Activated CD4-positive, alpha-beta T cell treated with anti-CD3 and anti-CD28 coated beads, Interleukin-2, amount 10 ng/mL, durations not matched to agents 24 days and 14 days (primary cell): ENCODE measurements at regions of chr19 and their contacts with region 1.

Region 1: GRCh38 chr19:36528194-36528920 is at the start of gene ZNF260:
- DNase-seq: peak; percentile 97
- H3K4me3 Mint-ChIP-seq: peak within 1 kb of the TSS; percentile 96
- H3K27ac Mint-ChIP-seq: peak within 1 kb of the TSS; percentile 95
- H3K4me1 Mint-ChIP-seq: peaks cover 17% of the 10 kb centered on the region
- H3K27me3 Mint-ChIP-seq: no peaks in the 10 kb centered on the region
- total RNA-seq, gene ZNF260: 6.7 and 8.0 TPM in 2 replicates

Region 2: GRCh38 chr19:36489118-36489919 is 39.0 kb before region 1 on chr19 and contains the start of gene ZNF566:
- intact Hi-C with region 1: loop called (anchors 1 kb)
- DNase-seq: peak; percentile 97
- H3K4me3 Mint-ChIP-seq: peak within 1 kb of the TSS; percentile 99
- H3K27ac Mint-ChIP-seq: peak within 1 kb of the TSS; percentile 99
- H3K4me1 Mint-ChIP-seq: peaks cover 23% of the 10 kb centered on the region
- H3K27me3 Mint-ChIP-seq: no peaks in the 10 kb centered on the region
- total RNA-seq, gene ZNF566: 7.2 and 8.5 TPM in 2 replicates

Region 3: DNA sequence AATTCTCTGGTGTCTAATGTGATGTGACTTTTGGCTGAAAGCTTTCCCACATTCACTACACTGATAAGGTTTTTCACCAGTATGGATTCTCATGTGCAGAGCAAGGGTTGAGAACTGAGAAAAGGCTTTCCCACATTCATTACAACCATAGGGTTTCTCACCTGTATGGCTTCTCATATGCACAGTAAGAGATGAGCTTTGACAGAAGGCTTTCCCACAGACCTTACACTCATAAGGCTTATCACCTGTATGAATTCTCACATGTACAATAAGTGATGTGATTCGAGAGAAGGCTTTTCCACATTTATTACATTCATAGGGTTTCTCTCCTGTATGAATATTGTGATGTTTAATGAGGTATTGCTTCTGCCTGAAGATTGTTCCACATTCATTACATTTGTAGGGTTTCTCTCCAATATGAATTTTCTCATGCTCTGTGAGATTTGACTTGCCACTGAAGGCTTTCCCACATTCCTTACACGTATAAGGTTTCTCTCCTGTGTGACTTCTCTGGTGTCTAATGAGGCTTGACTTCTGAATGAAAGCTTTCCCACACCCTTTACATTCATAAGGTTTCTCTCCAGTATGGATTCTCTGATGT is 14.2 kb before region 1 on chr19:
- intact Hi-C with region 1: no loop called
- DNase-seq: no peak
- H3K4me3 Mint-ChIP-seq: no peak overlapping the region
- H3K27ac Mint-ChIP-seq: no peak overlapping the region
- H3K4me1 Mint-ChIP-seq: no peaks in the 10 kb centered on the region
- H3K27me3 Mint-ChIP-seq: no peaks in the 10 kb centered on the region

Region 4: DNA sequence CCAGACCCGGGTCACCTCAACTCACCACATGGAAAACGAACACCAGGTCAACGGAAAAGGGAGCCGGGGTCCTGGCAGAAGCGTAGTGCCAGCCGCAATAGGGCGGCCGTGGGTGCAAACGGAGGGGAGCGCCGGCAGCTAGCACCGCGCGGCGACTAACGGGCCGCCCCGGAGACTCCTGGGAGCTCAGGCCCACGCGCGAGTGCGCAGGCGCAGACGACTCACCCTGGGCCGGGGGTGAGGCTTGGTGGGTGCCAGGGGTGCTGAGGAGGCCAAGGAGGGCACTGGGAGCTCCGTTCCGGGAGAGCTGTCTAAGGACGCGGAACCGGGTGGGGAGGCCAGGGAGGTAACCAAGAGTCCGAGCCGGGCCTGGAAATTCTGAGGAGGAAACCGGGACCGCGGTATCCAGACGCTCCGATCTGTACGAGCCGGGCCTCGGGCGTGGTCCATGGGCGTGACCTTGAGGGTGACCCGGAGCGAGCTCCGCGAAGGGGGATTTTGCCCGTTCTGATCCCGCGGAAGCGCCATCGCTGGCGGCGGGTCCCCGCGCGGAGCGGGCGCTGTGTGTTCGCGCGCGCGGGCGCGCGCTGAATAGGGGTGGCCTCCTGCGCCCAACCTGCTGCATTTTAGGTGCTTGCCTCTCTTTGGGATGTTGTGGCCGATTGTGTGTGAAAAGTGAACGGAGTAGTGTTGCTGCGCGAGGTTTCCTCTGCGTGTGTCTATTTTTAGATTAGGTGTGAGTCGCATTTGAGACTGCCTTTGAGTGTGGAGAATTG is 76.9 kb after region 1 on chr19 and contains the start of gene ZNF382:
- intact Hi-C with region 1: loop called (anchors 1 kb)
- DNase-seq: peak; percentile 96
- H3K4me3 Mint-ChIP-seq: peak within 1 kb of the TSS; percentile 89
- H3K27ac Mint-ChIP-seq: peak within 1 kb of the TSS; percentile 98
- H3K4me1 Mint-ChIP-seq: peaks cover 22% of the 10 kb centered on the region
- H3K27me3 Mint-ChIP-seq: no peaks in the 10 kb centered on the region
- total RNA-seq, gene ZNF382: 9.5 and 13.2 TPM in 2 replicates

Region 5: DNA sequence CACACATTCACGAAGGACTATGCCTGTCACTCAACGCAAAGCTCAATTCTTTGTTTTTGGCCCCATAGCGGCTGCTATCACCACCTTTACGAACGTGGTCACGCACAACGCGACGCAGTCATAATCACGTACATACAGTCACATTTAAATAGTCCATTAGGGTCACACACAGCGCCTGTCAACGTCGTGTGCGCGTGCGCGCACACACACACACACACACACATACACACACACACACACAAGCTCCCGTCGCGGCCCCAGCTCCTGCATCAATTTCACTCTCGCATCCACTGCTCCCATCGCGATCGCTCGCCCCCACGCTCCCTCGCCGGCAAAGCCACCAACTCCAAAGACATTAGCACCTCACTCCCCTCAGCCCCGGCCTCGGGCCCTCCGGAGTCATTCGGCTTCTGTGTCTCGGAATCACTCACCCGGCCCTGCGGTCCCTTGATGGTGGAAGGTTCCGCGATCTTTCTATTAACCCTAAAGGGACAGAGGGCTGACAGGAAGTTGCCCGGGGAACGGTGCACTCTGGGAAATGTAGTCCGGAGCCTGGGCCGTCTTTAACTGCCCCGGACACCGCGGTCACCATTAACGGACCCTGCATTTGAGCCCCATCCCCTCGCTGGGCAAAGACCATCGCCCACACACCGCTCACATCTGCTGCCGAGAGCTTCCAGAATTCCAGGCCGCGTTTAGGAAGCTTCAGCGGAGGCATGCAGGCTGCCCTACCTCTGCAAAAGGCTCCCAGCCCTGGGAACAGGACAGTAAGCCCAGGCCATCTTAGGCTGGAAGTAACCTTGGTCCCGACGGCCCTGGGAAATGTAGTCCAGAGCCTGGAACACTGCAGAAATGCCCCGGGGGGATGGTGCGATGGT is 309.8 kb after region 1 on chr19 and contains the start of gene ZNF790:
- intact Hi-C with region 1: loop called (anchors 1 kb)
- DNase-seq: peak; percentile 94
- H3K4me3 Mint-ChIP-seq: no peak within 1 kb of the TSS
- H3K27ac Mint-ChIP-seq: peak within 1 kb of the TSS; percentile 49
- H3K4me1 Mint-ChIP-seq: peaks cover 4% of the 10 kb centered on the region
- H3K27me3 Mint-ChIP-seq: no peaks in the 10 kb centered on the region
- total RNA-seq, gene ZNF790: 5.1 and 6.7 TPM in 2 replicates